GM12878 (cell line): ENCODE measurements at regions of chr6 and their contacts with region 1.

Region 1: DNA sequence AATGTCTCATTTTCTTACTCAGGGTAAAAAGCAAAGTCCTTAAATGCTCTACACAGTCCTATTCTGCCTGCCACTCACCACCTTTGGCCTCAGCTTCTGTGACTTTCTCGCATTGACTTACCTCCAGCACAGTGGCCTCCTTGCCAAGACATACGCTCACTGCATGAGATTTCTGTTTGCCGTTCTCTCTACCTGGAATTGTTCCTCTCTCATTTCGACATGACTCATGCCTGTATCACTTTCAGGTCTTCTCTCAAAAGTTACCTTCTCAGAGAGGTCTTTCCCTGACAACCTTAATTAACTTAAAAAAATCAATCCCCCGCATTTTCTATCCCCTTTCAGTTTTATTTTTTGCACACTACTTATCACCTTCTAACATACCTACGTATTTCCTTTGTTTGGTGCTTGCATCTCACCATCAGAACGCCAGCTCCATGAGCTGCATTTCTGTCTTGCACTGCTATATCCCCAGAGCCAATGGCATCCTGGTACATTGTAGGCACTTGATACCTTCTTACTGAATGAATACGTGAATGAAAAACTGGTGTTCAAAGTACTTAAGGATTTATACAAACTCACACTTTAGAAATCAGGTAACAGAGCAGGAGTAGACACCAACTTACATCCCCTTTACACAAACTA is 24.5 kb downstream of the TENT5A start:
- DNase-seq: peak; percentile 20
- ATAC-seq: peak; percentile 84
- H3K4me3 ChIP-seq: no peak overlapping the region
- H3K27ac ChIP-seq: no peak overlapping the region
- H3K4me1 ChIP-seq: no peaks in the 10 kb centered on the region
- H3K27me3 ChIP-seq: no peaks in the 10 kb centered on the region
- CTCF ChIP-seq: no peak
- EP300 ChIP-seq: no peak
- POLR2A ChIP-seq: no peak
- RAD21 ChIP-seq: no peak

Region 2: DNA sequence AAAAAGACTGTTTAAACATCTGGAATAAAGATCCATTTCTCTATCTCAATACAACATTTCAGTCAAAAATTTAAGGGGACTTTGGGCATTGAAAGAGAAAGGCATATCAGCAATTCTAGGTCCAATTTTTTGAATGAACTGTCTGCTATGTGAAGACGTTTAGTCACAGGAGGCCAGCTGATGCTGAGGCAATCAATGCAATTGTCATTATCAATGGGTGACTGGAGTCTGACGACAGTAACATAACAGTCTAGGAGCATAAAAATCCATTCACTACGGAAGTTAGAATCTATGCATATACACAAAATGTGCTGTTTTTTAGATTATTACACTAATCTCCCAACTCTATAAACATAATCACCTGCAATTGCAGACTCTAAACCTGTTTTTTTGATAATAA is 13.3 kb before region 1 on chr6:
- CTCF ChIA-PET with region 1: interaction called, 4 read pairs
- POLR2A ChIA-PET with region 1: interaction called, 3 read pairs
- RAD21 ChIA-PET with region 1: interaction called, 11 read pairs
- SMC1A ChIA-PET with region 1: interaction called, 3 read pairs
- in situ Hi-C with region 1: no loop called
- intact Hi-C with region 1: no loop called
- DNase-seq: no peak
- ATAC-seq: no peak
- H3K4me3 ChIP-seq: no peak overlapping the region
- H3K27ac ChIP-seq: no peak overlapping the region
- H3K4me1 ChIP-seq: no peaks in the 10 kb centered on the region
- H3K27me3 ChIP-seq: no peaks in the 10 kb centered on the region
- CTCF ChIP-seq: no peak
- EP300 ChIP-seq: no peak
- POLR2A ChIP-seq: no peak
- RAD21 ChIP-seq: no peak